PC-3 (cell line): ENCODE measurements at regions of chr2 and their contacts with region 1.

Region 1: DNA sequence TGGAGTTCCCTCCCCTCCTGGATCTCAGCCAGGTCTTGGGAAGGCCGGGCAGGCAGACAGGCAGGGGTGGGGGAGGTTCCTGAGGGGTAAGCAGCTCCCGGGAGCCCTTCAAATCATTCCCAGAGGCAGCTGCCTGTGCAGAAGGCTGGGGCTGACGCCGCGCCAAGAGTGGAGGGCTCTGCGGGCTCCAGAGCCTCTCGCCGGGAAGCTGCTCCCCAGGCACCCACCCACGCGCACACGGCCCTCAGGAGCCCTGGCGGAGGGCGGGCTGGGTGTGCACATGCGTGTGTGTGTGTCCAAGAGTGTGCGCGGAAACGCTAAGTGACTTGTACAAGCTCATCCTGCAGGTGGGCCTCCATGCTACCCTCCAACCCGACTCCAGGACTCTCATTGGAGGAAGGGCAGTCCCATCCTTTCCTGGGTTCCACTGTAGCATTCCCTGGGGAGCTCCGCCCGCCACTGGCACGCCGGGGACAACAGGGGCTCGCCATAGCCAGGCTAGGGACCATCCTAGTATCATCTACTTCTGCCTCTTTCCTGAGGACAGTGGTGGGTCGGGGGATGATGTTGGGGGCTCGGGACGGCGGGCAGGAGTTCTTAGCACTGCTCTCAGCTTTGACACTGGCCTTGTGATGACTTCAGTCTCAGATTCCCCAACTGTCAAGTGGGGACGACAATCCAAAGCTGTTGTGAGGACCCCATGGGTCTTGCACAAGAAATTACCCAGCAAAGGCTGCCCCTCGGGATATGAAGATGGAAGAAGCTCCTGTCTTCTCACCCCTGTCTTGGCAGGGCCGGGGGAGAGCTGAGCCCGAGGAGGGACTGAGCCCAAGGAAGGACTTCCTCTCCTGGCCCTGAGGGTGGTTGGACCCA is 50.3 kb downstream of the INHBB start:
- DNase-seq: peak; percentile 39
- ATAC-seq: no peak
- H3K4me3 ChIP-seq: 0 out of 2 replicates have a peak overlapping the region, but pooled peaks have one; percentile 3
- H3K27ac ChIP-seq: peak overlapping the region; percentile 93
- H3K4me1 ChIP-seq: peaks cover 52% of the 10 kb centered on the region
- H3K27me3 ChIP-seq: no peaks in the 10 kb centered on the region
- CTCF ChIP-seq: no peak

Region 2: DNA sequence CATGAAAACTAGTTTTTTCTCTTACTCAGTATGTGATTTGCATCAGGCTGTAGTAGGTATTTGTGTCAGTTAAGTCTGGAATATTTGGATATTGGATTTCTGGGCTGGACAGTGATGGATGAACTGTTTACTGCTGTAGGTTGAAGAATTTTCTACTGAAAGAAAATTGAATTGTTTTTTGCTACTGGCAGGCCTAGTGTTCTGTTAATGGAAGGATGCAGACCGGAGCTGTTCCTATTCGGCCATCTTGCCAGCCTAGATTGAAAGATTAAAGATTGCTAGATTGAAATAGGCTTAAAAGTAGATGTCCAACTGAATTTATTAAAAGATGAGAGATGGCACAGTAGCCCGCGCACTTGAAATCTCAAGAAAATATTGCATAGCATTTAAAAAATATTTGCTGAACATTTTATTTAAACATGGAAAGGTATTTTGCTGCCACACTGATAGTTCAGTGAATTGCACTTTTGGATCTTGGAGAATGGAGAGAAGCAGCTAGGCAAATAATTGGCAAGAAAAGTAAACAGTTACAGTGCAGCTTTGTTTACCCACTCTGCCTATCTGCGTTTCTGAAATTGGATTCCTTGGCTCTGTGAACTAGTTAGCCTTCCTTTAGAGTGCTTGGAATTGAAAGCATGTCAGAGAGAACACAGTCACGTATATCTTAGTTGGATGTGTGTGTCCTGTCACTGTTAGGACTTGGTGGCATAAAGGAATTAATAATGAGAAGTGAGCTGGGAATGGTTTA is 329.3 kb before region 1 on chr2:
- CTCF ChIA-PET with region 1: no interaction called
- POLR2A ChIA-PET with region 1: no interaction called
- intact Hi-C with region 1: no loop called
- DNase-seq: peak; percentile 80
- ATAC-seq: peak; percentile 98
- H3K4me3 ChIP-seq: peak overlapping the region; percentile 46
- H3K27ac ChIP-seq: peak overlapping the region; percentile 46
- H3K4me1 ChIP-seq: peaks cover 17% of the 10 kb centered on the region
- H3K27me3 ChIP-seq: no peaks in the 10 kb centered on the region
- CTCF ChIP-seq: no peak

Region 3: GRCh38 chr2:120367649-120368048 is 28.6 kb before region 1 on chr2:
- CTCF ChIA-PET with region 1: interaction called, 3 read pairs
- POLR2A ChIA-PET with region 1: interaction called, 12 read pairs
- intact Hi-C with region 1: loop called (anchors 1 kb)
- DNase-seq: peak; percentile 97
- ATAC-seq: peak; percentile 87
- H3K4me3 ChIP-seq: peak overlapping the region; percentile 42; the same call in 1 of the 2 replicates
- H3K27ac ChIP-seq: peak overlapping the region; percentile 81
- H3K4me1 ChIP-seq: peaks cover 36% of the 10 kb centered on the region
- H3K27me3 ChIP-seq: no peaks in the 10 kb centered on the region
- CTCF ChIP-seq: no peak

Region 4: GRCh38 chr2:120470041-120470965 is 74.1 kb after region 1 on chr2:
- CTCF ChIA-PET with region 1: no interaction called
- POLR2A ChIA-PET with region 1: no interaction called
- intact Hi-C with region 1: loop called (anchors 2 kb)
- DNase-seq: peak; percentile 97
- ATAC-seq: peak; percentile 80
- H3K4me3 ChIP-seq: no peak overlapping the region
- H3K27ac ChIP-seq: peak overlapping the region; percentile 83
- H3K4me1 ChIP-seq: peaks cover 55% of the 10 kb centered on the region
- H3K27me3 ChIP-seq: no peaks in the 10 kb centered on the region
- CTCF ChIP-seq: no peak